ENCODE measurements at regions of chr10 and their contacts with region 1.

Region 1: DNA sequence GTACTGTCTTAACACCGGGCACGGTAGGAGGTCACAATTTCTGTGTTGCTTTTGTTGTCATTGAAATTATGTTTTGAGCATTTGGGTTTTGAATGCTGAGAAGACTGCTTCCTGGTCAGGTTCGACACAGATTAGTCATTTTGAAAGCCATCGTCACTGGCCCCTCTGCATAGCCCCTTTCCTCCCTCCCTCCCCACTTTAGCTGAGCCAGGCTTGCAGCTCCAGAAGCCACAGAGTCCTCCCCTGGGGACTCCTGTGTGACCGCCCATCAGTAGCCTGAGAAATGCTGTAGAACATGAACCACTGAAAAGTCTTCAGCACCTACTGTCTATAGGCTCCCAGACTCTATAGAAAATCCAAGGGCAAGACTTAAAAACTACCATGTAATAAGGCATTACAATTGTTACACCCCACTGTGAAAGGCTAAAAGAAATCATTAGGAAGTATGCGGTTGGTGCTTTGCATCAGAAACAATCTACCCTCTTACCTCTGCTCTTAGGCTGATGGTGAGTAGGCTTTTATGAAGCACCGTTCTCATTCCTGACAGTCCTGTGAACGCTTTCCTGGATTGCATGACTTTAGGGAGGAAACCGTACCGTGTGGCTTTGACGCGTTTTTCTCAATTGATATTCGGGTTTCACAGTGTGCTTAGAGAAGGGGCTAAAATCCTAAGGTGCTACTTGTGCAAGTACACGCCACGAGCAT is 24.8 kb downstream of the JCAD start:
- DNase-seq: no peak
- ATAC-seq: no peak
- H3K4me3 ChIP-seq: no peak overlapping the region
- H3K27ac ChIP-seq: peak overlapping the region in 1 of 2 donors; percentile 19
- H3K4me1 ChIP-seq: peaks cover 0 to 3% of the 10 kb centered on the region in 2 donors
- H3K27me3 ChIP-seq: no peaks in the 10 kb centered on the region
- CTCF ChIP-seq: no peak

Region 2: DNA sequence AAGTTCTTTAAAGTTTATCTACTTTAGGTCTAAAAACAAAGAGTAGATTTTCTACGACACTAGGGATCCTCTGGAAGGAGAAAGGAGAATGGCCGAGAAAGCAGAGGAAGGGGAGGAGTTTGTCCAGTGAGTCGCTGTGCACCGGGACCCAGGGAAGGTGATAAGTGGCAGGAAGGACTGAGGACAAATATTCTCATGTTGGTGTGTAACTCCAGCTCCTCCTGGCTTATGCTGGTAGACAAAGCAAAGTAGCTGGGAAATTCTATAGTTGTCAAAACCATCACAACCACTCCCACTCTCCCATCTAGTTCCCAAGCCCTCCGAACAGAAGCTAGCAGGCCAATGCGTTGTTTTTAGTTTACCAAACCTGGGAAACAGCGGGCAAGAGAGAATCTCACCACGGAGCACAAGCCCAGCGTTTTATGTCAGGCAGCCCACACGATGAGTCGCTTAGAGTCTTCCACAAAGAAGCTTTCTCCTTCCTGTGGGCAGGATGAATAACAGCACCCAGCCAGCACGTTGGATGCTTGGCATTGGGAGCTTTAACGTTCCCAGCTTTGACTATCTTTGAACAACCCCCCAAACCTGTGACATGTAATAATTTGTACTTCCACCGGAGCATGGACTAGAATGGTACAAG is 57.7 kb after region 1 on chr10:
- intact Hi-C with region 1: no loop called
- DNase-seq: no peak
- ATAC-seq: no peak
- H3K4me3 ChIP-seq: no peak overlapping the region
- H3K27ac ChIP-seq: no peak overlapping the region
- H3K4me1 ChIP-seq: no peaks in the 10 kb centered on the region
- H3K27me3 ChIP-seq: no peaks in the 10 kb centered on the region
- CTCF ChIP-seq: no peak

Region 3: DNA sequence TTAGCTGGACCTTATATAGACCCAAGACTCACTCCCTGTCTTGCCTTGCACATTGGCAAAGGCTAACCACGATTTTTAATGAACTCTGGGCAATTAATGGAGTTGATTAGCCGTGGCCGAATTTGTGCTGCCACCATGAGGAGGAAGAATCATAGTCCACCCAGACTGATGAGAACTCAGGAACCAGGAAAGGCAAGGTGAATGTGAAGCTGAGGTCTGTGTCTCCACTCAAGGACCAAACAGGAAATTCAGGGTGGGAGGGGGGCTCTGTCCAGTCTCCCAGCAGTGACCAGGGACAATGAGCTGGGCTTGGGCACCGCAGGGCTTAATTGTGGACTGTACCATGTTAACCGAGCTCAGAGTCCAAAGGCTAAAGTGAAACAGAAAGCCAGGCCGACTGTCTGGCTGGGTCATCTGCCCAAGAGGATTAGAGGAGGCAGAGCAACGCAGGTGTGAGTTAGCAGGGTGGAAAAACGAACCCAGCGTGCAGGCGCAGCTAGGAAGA is 151.8 kb after region 1 on chr10:
- intact Hi-C with region 1: loop called in 1 of 2 experiments (anchors 10 kb)
- DNase-seq: no peak
- ATAC-seq: peak; percentile 13
- H3K4me3 ChIP-seq: no peak overlapping the region
- H3K27ac ChIP-seq: peak overlapping the region; percentile 42 to 66
- H3K4me1 ChIP-seq: peaks cover 13 to 43% of the 10 kb centered on the region in 2 donors
- H3K27me3 ChIP-seq: no peaks in the 10 kb centered on the region
- CTCF ChIP-seq: no peak

Measured in left lung (tissue), 14 donors.